Naive thymus-derived CD4-positive, alpha-beta T cell (primary cell): ENCODE measurements at regions of chr3 and their contacts with region 1.

Region 1: GRCh38 chr3:48847504-48848423 is at the start of gene PRKAR2A:
- DNase-seq: peak; percentile 51 to 87 (median 67)
- ATAC-seq: peak; percentile 92
- H3K4me3 ChIP-seq: peak within 1 kb of the TSS; percentile 70
- H3K4me3 Mint-ChIP-seq: peak within 1 kb of the TSS; percentile 86 to 93 (median 90)
- H3K27ac ChIP-seq: peak within 1 kb of the TSS; percentile 79
- H3K27ac Mint-ChIP-seq: peak within 1 kb of the TSS; percentile 81 to 98 (median 94)
- H3K4me1 ChIP-seq: peaks cover 15 to 21% of the 10 kb centered on the region in 2 donors
- H3K4me1 Mint-ChIP-seq: peaks cover 12 to 34% (median 28%) of the 10 kb centered on the region in 7 donors
- H3K27me3 ChIP-seq: no peaks in the 10 kb centered on the region
- H3K27me3 Mint-ChIP-seq: no peaks in the 10 kb centered on the region
- total RNA-seq, gene PRKAR2A: 25.9 to 45.1 (median 38.9) TPM

Region 2: GRCh38 chr3:48765376-48765775 is 82.4 kb before region 1 on chr3:
- CTCF ChIA-PET with region 1: no interaction called
- POLR2A ChIA-PET with region 1: interaction called, 3 read pairs
- intact Hi-C with region 1: loop called in 1 of 2 experiments (anchors 5 kb)
- DNase-seq: no peak
- ATAC-seq: peak; percentile 45
- H3K4me3 ChIP-seq: no peak overlapping the region
- H3K4me3 Mint-ChIP-seq: no peak overlapping the region
- H3K27ac ChIP-seq: no peak overlapping the region
- H3K27ac Mint-ChIP-seq: peak overlapping the region in 2 of 9 donors; percentile 0 to 26
- H3K4me1 ChIP-seq: no peaks in the 10 kb centered on the region
- H3K4me1 Mint-ChIP-seq: peaks cover 0 to 3% (median 0%) of the 10 kb centered on the region in 7 donors
- H3K27me3 ChIP-seq: no peaks in the 10 kb centered on the region
- H3K27me3 Mint-ChIP-seq: no peaks in the 10 kb centered on the region

Region 3: DNA sequence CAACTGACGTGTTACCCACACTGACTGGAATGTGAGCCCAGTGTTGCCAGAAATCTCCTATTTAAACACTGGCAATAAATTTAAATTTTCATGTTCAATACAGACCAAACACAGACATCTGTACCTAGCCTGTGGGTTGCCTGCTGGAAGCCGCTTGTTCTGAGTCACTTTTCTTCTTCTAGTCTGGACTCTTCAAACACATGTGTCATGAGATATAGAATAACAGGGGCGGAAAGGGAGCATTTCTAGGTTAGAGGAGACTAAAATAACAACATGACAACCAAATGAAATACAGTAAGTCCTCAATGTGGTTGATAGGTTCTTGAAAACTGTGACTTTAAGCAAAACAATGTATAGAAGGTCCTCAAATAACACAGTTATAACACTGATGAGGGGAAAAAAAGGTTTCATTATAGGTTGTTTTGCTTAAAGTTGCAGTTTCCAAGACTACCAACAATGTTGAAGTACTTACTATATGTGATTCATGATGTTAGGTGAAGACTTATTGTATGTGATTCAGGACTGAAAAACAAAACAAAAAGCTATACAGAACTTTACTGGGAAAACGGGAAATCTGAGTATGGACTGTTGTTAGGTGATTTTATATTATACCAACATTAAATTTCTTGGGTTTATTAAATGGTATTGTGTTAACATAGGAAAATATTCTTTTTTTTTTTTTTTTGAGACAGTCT is 63.2 kb before region 1 on chr3:
- CTCF ChIA-PET with region 1: no interaction called
- POLR2A ChIA-PET with region 1: interaction called, 3 read pairs
- intact Hi-C with region 1: loop called in 1 of 2 experiments (anchors 5 kb)
- DNase-seq: no peak
- ATAC-seq: no peak
- H3K4me3 ChIP-seq: no peak overlapping the region
- H3K4me3 Mint-ChIP-seq: no peak overlapping the region
- H3K27ac ChIP-seq: no peak overlapping the region
- H3K27ac Mint-ChIP-seq: peak overlapping the region in 2 of 9 donors; percentile 12 to 16
- H3K4me1 ChIP-seq: peaks cover 6 to 12% of the 10 kb centered on the region in 2 donors
- H3K4me1 Mint-ChIP-seq: peaks cover 9 to 16% (median 15%) of the 10 kb centered on the region in 7 donors
- H3K27me3 ChIP-seq: no peaks in the 10 kb centered on the region
- H3K27me3 Mint-ChIP-seq: no peaks in the 10 kb centered on the region

Region 4: GRCh38 chr3:48795997-48796732 is 51.6 kb before region 1 on chr3:
- CTCF ChIA-PET with region 1: no interaction called
- POLR2A ChIA-PET with region 1: no interaction called
- intact Hi-C with region 1: no loop called
- DNase-seq: no peak
- ATAC-seq: no peak
- H3K4me3 ChIP-seq: no peak overlapping the region
- H3K4me3 Mint-ChIP-seq: no peak overlapping the region
- H3K27ac ChIP-seq: no peak overlapping the region
- H3K27ac Mint-ChIP-seq: peak overlapping the region in 4 of 9 donors; percentile 9 to 63 (median 40)
- H3K4me1 ChIP-seq: no peaks in the 10 kb centered on the region
- H3K4me1 Mint-ChIP-seq: peaks cover 0 to 12% (median 5%) of the 10 kb centered on the region in 7 donors
- H3K27me3 ChIP-seq: no peaks in the 10 kb centered on the region
- H3K27me3 Mint-ChIP-seq: no peaks in the 10 kb centered on the region

Region 5: DNA sequence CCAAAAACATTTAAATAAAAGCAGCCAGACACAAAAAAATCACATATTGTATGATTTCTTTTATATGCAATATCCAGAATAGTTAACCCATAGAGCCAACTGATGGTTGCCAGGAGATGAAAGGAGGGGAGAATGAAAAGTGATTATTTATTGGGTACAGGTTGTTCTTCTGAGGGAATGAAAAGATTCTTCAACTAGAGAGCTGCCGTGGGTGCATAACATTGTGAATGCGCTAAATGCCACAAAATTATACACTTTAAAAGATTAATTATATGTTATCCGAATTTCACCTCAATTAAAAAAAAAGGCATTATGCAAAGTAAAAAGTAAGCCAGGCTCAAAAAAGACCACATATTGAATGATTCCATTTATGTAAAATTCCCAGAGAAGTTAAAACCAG is 36.2 kb before region 1 on chr3:
- CTCF ChIA-PET with region 1: no interaction called
- POLR2A ChIA-PET with region 1: interaction called, 13 read pairs
- intact Hi-C with region 1: loop called (anchors 1 kb)
- DNase-seq: no peak
- ATAC-seq: no peak
- H3K4me3 ChIP-seq: no peak overlapping the region
- H3K4me3 Mint-ChIP-seq: peak overlapping the region in 5 of 10 donors; percentile 16 to 51 (median 33)
- H3K27ac ChIP-seq: peak overlapping the region; percentile 64
- H3K27ac Mint-ChIP-seq: peak overlapping the region; percentile 64 to 97 (median 89)
- H3K4me1 ChIP-seq: peaks cover 16 to 18% of the 10 kb centered on the region in 2 donors
- H3K4me1 Mint-ChIP-seq: peaks cover 22 to 47% (median 40%) of the 10 kb centered on the region in 7 donors
- H3K27me3 ChIP-seq: no peaks in the 10 kb centered on the region
- H3K27me3 Mint-ChIP-seq: no peaks in the 10 kb centered on the region